ENCODE measurements at regions of chr14 and their contacts with region 1.

Region 1: DNA sequence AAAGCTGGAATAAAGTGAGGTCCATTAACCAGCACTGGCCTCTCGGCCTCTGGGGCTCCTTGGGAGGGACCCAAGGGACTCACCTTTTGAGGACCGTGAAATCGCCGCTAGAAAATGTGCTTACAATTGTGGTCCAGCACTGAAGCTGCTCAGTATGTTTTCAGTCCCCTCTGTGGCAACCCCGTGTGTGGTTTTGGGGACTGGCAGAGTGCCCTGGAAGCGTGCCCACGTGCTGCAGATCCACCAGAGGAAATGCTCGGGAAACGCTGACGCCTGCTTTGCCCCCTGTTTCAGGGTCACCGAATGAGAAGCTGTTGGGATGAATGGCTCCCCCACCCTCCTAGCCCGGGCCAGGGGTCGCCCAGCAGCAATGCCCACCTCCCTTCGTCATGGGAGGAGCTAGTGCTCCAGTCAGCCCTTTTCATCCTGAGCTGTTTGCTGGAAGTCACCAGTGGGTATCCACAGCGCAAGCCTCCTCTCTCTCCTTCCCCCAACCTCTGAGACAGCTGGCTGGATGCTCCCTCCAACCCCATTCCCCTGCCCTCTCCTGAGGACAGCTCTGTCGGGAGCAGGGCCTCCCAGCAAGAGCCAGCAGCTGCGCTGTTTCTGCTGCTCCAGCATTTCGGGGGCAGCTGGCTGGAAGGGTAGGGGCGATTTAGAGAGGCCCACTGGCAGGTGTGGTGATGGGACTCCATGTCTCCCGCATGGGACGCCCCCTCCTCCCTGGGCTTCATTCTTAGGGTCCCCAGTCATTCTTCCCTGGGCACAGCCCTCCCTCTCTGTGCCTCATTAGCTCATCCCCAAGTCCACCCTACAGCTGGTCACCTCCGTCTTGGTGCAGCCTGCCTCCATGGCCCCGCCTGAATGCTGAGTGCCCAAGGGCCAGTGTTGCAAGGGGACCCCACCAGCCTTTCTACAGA is 33.2 kb upstream of the PPP1R13B start:
- DNase-seq: peak; percentile 60
- ATAC-seq: peak; percentile 47
- H3K4me3 ChIP-seq: peak overlapping the region; percentile 60
- H3K27ac ChIP-seq: peak overlapping the region; percentile 27
- H3K4me1 ChIP-seq: peaks cover 17% of the 10 kb centered on the region
- H3K27me3 ChIP-seq: no peaks in the 10 kb centered on the region
- CTCF ChIP-seq: no peak

Region 2: DNA sequence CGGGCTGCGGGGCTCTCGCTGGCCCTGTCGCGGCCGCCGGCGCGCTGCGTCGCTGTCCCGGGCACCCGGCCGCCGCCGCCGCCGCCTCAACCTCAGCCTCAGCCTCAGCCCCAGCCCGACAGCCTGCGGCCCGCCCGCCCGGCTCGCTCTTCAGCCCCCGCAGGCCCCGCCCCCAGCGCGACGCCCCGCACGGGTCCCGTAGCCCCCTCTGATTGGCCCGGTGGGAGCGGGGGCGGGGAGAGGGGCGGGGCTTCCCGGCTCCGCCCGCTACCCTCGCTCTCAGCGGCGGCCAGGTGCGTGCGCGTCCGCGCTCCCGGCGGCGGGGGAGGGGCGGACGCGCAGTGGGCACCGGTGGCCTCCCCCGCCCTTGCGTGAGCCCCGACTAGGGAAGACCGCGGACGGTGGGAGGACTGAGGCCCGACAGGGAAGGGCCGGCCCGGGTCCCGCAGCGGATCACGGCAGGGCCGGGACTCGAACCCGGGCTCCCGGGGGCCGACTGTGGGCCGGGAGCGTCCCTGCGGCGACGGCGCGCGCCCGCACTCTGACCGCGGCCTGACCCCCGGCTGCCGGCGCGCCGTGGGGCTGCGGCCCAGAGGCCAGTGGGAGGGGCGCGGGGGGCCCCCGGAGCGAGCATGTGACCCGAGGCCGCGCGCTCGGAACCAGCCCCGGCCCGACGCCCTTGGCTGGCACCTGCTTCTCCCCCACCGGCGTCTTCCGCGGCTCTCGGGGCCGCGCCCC is 33.0 kb before region 1 on chr14 and contains the start of gene PPP1R13B:
- CTCF ChIA-PET with region 1: no interaction called
- POLR2A ChIA-PET with region 1: no interaction called
- intact Hi-C with region 1: loop called (anchors 1 kb)
- DNase-seq: peak; percentile 94
- ATAC-seq: peak; percentile 92
- H3K4me3 ChIP-seq: peak within 1 kb of the TSS; percentile 81
- H3K27ac ChIP-seq: no peak within 1 kb of the TSS
- H3K4me1 ChIP-seq: peaks cover 23% of the 10 kb centered on the region; the same call in 1 of the 2 replicates
- H3K27me3 ChIP-seq: no peaks in the 10 kb centered on the region
- CTCF ChIP-seq: no peak
- total RNA-seq, gene PPP1R13B: 13.0 and 16.4 TPM in 2 replicates

Region 3: GRCh38 chr14:103859416-103860197 is 21.0 kb before region 1 on chr14:
- CTCF ChIA-PET with region 1: no interaction called
- POLR2A ChIA-PET with region 1: interaction called, 15 read pairs
- intact Hi-C with region 1: no loop called
- DNase-seq: no peak
- ATAC-seq: no peak
- H3K4me3 ChIP-seq: no peak overlapping the region
- H3K27ac ChIP-seq: no peak overlapping the region
- H3K4me1 ChIP-seq: peaks cover 18% of the 10 kb centered on the region
- H3K27me3 ChIP-seq: no peaks in the 10 kb centered on the region
- CTCF ChIP-seq: no peak

Measured in PC-3 (cell line).